ENCODE measurements at regions of chr5 and their contacts with region 1.

Region 1: DNA sequence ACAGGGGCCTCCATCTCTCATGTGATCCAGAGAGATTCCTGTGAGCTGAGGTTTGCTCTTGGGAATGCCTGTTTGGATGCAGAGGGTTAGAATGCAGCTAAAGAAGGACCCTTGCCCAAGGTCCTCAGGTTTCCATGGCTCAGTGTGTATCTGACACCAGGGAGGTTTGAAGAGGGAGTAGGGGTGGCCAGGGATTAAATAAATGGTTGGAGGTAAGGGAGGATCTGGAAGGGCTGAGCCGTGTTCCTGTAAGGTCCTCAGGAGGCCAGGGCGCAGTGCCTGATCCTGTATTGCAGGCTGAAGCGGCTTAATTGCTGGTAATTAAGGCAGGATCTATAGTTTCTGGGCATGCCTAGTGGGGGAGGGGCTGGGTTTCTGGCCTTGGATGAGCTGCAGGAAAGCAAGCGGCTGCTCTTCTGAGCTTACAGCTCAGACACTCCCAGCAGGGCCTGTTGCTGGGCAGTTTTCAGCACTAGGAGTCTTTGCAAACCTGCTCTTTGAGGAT is 41.5 kb upstream of the MAP1B start:
- DNase-seq: peak; percentile 23 to 25
- ATAC-seq: no peak
- H3K4me3 ChIP-seq: no peak overlapping the region
- H3K27ac ChIP-seq: peak overlapping the region; percentile 87 to 93
- H3K4me1 ChIP-seq: peaks cover 55% of the 10 kb centered on the region
- CTCF ChIP-seq: no peak
- EP300 ChIP-seq: no peak
- POLR2A ChIP-seq: no peak
- RAD21 ChIP-seq: no peak

Region 2: DNA sequence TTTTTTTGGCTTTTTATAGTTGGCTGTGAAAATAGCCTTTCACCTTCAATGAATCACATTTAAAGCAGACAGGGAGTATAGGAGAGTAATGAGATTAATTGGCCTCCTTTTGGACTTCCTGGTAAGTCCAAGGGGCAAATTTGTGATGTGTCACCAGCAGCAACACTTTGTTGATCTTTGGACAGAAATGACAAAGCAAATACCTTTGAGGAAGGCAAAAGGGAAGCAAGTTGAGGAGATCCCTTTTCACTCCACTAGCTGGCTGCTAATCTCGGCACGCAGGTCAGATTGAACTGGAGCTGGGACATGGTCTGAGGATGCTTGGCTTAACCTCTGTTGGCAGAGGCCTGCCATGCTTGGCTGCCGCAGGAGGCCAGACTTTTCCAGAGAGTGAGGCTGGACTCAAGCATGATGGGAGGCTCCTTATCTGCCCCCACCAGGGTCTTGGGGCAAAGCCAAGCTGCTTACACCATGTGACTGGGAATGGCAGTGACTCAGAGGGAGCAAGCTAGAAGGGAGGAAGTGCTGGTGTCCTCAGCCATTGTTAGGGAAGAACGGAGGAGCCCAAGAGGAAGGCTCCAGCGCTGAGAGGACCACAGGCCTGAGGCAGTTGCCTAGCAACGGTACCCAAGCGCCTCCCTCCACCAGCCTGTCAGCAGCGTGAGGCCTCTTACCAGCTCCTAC is 133.0 kb before region 1 on chr5:
- CTCF ChIA-PET with region 1: interaction called, 5 read pairs
- POLR2A ChIA-PET with region 1: interaction called, 19 read pairs
- DNase-seq: peak; percentile 81 to 93
- ATAC-seq: peak; percentile 90 to 93
- H3K4me3 ChIP-seq: no peak overlapping the region
- H3K27ac ChIP-seq: peak overlapping the region; percentile 89
- H3K4me1 ChIP-seq: peaks cover 40% of the 10 kb centered on the region
- CTCF ChIP-seq: no peak
- EP300 ChIP-seq: peak; percentile 53 to 84; a peak in 3 of 5 replicates
- POLR2A ChIP-seq: no peak
- RAD21 ChIP-seq: peak; percentile 1 to 57; a peak in 3 of 5 replicates

Region 3: GRCh38 chr5:71949778-71950177 is 116.0 kb before region 1 on chr5:
- CTCF ChIA-PET with region 1: no interaction called
- POLR2A ChIA-PET with region 1: no interaction called
- DNase-seq: no peak
- ATAC-seq: no peak
- H3K4me3 ChIP-seq: no peak overlapping the region
- H3K27ac ChIP-seq: no peak overlapping the region
- H3K4me1 ChIP-seq: no peaks in the 10 kb centered on the region
- CTCF ChIP-seq: no peak
- EP300 ChIP-seq: no peak
- POLR2A ChIP-seq: no peak
- RAD21 ChIP-seq: no peak

Region 4: GRCh38 chr5:72084876-72085275 is 19.1 kb after region 1 on chr5:
- CTCF ChIA-PET with region 1: no interaction called
- POLR2A ChIA-PET with region 1: no interaction called
- DNase-seq: no peak
- ATAC-seq: no peak
- H3K4me3 ChIP-seq: no peak overlapping the region
- H3K27ac ChIP-seq: no peak overlapping the region
- H3K4me1 ChIP-seq: peaks cover 1% of the 10 kb centered on the region
- CTCF ChIP-seq: no peak
- EP300 ChIP-seq: no peak
- POLR2A ChIP-seq: no peak
- RAD21 ChIP-seq: no peak

Region 5: DNA sequence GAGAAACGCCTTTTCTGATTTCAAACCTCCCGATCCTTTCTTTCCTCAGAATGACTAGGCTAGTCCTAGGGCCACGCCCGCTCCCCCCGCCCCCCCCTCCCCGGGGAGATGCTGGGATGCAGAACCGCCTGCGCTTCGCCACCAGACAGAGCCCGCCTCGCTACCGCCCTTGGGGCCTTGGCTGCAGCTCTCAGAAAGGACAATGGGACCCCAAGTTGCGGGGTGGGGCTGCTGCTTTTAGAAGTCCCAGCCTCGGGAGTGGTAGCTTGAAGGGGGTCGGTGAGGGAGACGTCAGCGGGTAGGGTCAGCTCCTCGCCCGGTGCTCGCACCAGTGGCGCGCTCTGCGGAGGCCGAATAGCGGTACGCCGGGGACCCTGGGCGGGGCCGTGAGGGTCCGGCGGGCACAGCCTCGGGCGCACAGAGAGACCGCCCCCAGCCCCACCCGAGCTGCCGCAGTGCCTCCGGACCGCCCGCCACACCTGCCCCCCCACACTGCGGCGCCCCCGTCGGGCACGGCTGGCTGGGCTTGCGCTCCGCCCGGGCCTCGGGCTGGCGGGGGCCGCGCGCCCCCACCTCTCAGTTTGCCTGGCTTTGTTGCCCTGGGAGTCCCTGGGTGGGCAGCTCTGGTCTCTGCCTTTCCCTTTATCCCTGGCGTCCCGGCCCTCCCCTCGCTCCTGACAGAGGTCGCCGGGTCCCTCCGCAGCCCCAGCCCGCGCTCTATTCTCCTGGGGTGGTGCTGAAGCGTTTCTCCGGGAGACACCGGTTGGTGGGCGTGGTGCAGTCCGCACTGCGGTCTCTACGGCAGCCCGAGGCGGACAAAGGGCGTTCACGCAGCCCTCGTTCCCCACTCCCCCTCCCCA is 42.6 kb after region 1 on chr5:
- CTCF ChIA-PET with region 1: interaction called, 10 read pairs
- POLR2A ChIA-PET with region 1: interaction called, 70 read pairs
- DNase-seq: peak; percentile 61 to 70
- ATAC-seq: peak; percentile 60 to 70
- H3K4me3 ChIP-seq: peak overlapping the region; percentile 84
- H3K27ac ChIP-seq: peak overlapping the region; percentile 86 to 96
- H3K4me1 ChIP-seq: peaks cover 47% of the 10 kb centered on the region
- CTCF ChIP-seq: no peak
- EP300 ChIP-seq: no peak
- POLR2A ChIP-seq: peak; percentile 26; the same call in 1 of the 2 replicates
- RAD21 ChIP-seq: no peak

Measured in A549 (cell line).